Activated CD4-positive, alpha-beta T cell treated with anti-CD3 and anti-CD28 coated beads for 36 hours (primary cell): ENCODE measurements at regions of chr6 and their contacts with region 1.

Region 1: DNA sequence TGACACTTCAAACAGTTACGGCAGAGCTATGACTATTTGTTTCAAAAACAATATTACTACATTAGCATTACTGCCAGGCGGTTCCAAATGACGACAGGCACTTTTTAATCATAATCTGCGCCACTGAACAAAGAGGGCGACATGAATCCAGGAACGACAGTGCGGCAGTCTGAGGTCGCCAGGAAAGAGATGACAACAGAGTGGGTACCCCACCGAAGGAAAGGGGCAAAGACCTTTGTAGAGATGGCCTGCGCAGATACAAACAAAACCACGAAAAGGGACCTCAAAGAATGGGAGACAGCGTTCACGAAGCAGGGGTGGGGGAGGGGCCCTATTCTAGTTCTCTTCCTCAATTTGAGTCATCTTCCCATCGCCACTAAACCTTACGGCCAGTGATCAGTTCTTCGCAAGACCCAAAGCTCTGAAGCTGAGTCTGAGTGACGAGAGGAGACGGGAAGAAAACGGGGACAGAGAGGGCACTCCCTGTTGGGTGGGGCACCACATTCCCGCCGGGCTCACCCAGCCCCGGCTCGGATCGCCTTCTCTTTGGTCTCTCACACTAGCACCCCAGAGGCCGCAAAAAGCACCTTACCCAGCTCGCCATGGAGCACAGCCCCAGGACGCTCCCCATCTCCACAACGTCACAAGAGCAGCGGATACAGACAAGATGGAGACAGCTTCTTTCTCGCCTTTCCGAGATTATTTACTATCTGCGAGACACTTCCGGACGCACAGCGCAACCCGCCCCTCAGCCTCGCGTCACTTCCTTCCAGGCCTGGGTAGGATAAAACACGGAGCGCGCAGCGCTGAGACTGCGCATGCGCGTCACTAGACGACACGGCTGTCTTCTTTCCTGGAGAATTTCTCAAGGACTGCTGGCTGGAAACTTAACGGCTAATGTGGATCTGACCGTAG is at the start of gene SERINC1:
- DNase-seq: peak; percentile 95
- ATAC-seq: peak; percentile 97
- H3K4me3 Mint-ChIP-seq: peak within 1 kb of the TSS; percentile 96
- H3K27ac Mint-ChIP-seq: peak within 1 kb of the TSS; percentile 100
- H3K4me1 Mint-ChIP-seq: peaks cover 31% of the 10 kb centered on the region
- H3K27me3 Mint-ChIP-seq: no peaks in the 10 kb centered on the region
- total RNA-seq, gene SERINC1: 35.2 to 46.3 TPM

Region 2: GRCh38 chr6:121334299-121335086 is 1136.9 kb before region 1 on chr6 and contains the start of gene TBC1D32:
- CTCF ChIA-PET with region 1: no interaction called
- POLR2A ChIA-PET with region 1: no interaction called
- intact Hi-C with region 1: loop called (anchors 1 to 2 kb)
- DNase-seq: peak; percentile 93
- ATAC-seq: peak; percentile 92
- H3K4me3 Mint-ChIP-seq: peak within 1 kb of the TSS; percentile 94
- H3K27ac Mint-ChIP-seq: peak within 1 kb of the TSS; percentile 98
- H3K4me1 Mint-ChIP-seq: peaks cover 33% of the 10 kb centered on the region
- H3K27me3 Mint-ChIP-seq: no peaks in the 10 kb centered on the region
- total RNA-seq, gene TBC1D32: 9.2 to 9.9 TPM

Region 3: GRCh38 chr6:122399384-122400158 is 71.8 kb before region 1 on chr6 and contains the start of gene HSF2:
- CTCF ChIA-PET with region 1: interaction called, 5 read pairs
- POLR2A ChIA-PET with region 1: interaction called, 13 read pairs
- intact Hi-C with region 1: loop called (anchors 1 kb)
- DNase-seq: peak; percentile 97
- ATAC-seq: peak; percentile 98
- H3K4me3 Mint-ChIP-seq: peak within 1 kb of the TSS; percentile 94
- H3K27ac Mint-ChIP-seq: peak within 1 kb of the TSS; percentile 96
- H3K4me1 Mint-ChIP-seq: peaks cover 43% of the 10 kb centered on the region
- H3K27me3 Mint-ChIP-seq: no peaks in the 10 kb centered on the region
- total RNA-seq, gene HSF2: 18.1 to 20.6 TPM

Region 4: GRCh38 chr6:122530440-122531046 is 59.2 kb after region 1 on chr6:
- CTCF ChIA-PET with region 1: interaction called, 15 read pairs
- POLR2A ChIA-PET with region 1: no interaction called
- intact Hi-C with region 1: loop called (anchors 1 kb)
- DNase-seq: peak; percentile 58
- ATAC-seq: peak; percentile 72
- H3K4me3 Mint-ChIP-seq: no peak overlapping the region
- H3K27ac Mint-ChIP-seq: no peak overlapping the region
- H3K4me1 Mint-ChIP-seq: no peaks in the 10 kb centered on the region
- H3K27me3 Mint-ChIP-seq: peaks cover 22% of the 10 kb centered on the region

Region 5: DNA sequence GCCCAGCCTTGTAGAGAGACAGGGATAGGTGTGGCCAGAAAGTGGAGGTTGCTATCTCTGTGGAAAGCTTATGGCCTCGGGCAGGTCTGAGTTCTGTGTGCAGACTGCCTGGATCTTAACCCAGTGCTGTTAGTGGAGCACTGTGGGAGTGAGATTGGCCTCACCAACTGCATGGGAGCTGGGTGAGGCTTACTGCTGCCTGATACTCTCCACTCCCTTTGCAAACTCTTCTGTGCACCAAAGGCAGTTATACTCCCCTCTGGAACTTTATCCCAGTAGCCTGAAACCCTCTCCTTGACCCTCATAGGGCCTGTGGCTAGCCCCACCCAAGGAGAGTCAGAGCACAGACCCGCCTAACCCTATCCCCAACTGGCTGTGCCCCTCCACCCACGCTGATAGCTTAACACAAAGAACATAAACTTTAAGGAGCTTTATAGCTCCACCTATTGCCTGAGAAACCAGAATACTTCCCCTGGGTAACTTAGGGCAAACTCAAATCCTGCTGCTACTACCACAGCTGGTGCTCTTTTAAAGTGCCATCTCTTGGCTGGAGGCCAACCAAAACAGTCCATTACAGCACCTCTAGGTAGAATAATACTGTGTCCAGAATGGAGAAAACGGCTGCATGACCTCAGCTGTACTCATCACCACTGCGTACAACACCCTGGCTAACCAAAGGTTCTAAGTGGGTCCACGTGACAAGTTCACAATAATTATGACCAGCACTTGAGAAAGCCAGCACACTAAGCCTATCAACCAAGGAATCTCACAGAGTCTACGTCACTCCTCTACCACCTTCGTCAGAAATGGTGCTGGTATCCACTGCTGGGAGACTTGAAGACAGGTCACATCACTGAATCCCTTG is 97.7 kb after region 1 on chr6:
- CTCF ChIA-PET with region 1: no interaction called
- POLR2A ChIA-PET with region 1: no interaction called
- intact Hi-C with region 1: no loop called
- DNase-seq: no peak
- ATAC-seq: no peak
- H3K4me3 Mint-ChIP-seq: no peak overlapping the region
- H3K27ac Mint-ChIP-seq: no peak overlapping the region
- H3K4me1 Mint-ChIP-seq: peaks cover 2% of the 10 kb centered on the region
- H3K27me3 Mint-ChIP-seq: peaks cover 2% of the 10 kb centered on the region

Region 6: DNA sequence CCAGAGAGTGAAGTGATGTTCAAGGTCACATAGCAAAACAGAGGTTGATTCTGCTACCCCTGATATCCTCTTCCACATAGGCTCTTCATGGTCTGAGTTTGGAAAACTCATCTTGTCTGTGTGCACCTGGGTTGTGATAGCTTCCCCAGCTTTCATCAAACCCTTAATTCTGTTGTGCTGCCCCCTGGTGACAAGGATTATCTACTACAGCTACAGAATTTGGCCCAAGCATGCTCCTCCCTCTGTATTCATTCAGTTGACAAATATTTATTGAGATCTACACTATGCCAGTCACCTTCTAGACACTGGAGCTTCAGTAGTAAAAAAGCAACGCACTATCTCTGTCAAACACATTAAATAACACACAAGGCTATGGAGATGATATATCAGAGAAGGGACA is 368.1 kb after region 1 on chr6:
- CTCF ChIA-PET with region 1: no interaction called
- POLR2A ChIA-PET with region 1: no interaction called
- intact Hi-C with region 1: loop called in 1 of 2 experiments (anchors 5 kb)
- DNase-seq: peak; percentile 66
- ATAC-seq: peak; percentile 39
- H3K4me3 Mint-ChIP-seq: no peak overlapping the region
- H3K27ac Mint-ChIP-seq: no peak overlapping the region
- H3K4me1 Mint-ChIP-seq: no peaks in the 10 kb centered on the region
- H3K27me3 Mint-ChIP-seq: peaks cover 5% of the 10 kb centered on the region